ENCODE measurements at regions of chr3 and their contacts with region 1.

Region 1: GRCh38 chr3:136752422-136753325 is 496 bp upstream of the STAG1 start:
- DNase-seq: peak; percentile 99

Region 2: GRCh38 chr3:136994772-136995516 is 242.3 kb after region 1 on chr3:
- in situ Hi-C with region 1: loop called (anchors 25 kb)
- DNase-seq: peak; percentile 28